IMR-90 (cell line): ENCODE measurements at regions of chr2 and their contacts with region 1.

Region 1: DNA sequence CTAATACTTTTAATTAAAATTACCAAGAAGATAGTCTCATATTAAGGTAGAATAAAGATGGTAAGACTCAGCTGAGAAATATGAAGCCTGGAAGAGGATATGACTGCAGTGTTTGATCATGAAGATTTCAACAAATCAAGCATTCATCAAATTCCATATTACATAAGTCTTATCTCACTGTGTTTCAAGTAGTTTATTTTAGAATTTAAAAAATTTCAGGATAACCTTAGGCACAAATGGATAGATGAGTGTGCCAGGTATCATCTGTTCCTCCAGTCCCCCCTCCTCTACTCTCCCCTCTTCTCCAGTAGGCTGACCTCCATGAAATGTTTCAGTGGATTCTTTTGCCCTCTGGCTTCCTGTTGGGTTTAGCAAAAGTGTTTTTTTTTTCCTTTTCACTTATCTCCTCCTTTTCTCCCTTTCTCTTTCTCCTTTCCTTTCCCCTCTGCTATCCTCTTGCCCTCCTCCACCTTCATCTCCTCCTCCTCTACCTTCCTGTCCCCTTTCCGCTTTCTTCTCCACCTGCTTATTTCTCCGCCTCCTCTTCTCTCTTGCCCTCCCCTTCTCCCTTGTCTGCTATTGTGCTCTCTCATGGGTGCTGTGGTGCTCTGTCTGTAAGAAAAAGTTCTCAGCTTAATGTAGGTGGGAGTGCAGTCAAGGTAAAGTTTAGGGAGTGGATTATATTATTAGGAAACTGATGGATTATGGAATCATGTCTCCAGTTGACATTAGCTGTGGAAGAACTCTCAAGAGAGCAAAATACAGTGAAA is 72.8 kb downstream of the ABI2 start:
- DNase-seq: peak; percentile 43
- ATAC-seq: peak; percentile 31
- H3K4me3 ChIP-seq: no peak overlapping the region
- H3K27ac ChIP-seq: peak overlapping the region; percentile 58
- H3K4me1 ChIP-seq: peaks cover 15% of the 10 kb centered on the region
- H3K27me3 ChIP-seq: no peaks in the 10 kb centered on the region
- CTCF ChIP-seq: no peak
- POLR2A ChIP-seq: no peak
- RAD21 ChIP-seq: no peak

Region 2: DNA sequence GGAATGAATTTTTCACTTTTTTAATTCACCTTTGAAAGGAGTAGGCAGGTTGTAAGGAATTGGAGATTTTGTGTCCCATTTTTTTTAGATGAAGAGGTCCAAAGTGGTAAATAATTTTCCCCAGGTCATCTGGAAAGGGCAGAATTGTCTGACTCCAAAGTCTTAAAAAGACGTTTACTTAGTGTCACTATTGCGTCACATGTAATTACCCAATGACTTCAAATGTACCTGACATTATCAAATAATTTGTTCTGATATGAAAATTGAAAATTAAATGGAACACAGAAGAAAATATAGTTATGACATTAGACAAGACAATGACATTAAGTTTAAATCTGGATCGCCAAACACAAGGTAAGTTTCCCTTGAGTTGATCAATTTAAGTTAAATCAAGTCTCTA is 410.5 kb before region 1 on chr2:
- CTCF ChIA-PET with region 1: no interaction called
- POLR2A ChIA-PET with region 1: no interaction called
- dilution Hi-C with region 1: no loop called
- in situ Hi-C with region 1: no loop called
- intact Hi-C with region 1: no loop called
- DNase-seq: no peak
- ATAC-seq: no peak
- H3K4me3 ChIP-seq: no peak overlapping the region
- H3K27ac ChIP-seq: no peak overlapping the region
- H3K4me1 ChIP-seq: no peaks in the 10 kb centered on the region
- H3K27me3 ChIP-seq: no peaks in the 10 kb centered on the region
- CTCF ChIP-seq: no peak
- POLR2A ChIP-seq: no peak
- RAD21 ChIP-seq: no peak

Region 3: DNA sequence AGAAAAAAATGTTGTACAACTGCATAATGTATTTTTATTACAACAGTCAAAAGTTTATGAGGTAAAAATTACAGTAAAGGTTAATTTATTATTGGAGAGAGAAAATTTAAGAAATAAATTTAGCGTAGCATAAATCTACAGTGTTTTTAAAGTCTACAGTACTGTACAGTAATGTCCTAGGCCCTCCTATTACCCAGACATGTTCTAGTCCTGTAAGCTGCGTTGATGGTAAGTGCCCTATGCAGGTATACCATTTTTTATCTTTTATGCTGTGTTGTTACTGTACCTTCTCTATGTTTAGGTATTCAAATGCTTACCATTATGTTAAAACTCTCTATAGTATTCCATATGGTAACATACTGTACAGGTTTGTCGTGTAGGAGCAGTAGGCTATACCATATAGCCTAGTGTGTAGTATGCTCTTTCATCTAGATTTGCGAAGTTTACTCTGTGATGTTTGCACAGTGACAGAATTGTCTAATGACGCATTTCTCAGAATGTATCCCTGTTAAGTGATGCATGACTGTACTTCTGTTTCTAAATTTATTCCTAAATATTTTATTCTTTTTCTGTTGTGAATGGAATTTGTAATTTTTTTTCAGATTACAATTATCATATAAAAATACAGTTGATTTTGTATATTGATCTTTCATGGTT is 48.3 kb before region 1 on chr2:
- CTCF ChIA-PET with region 1: no interaction called
- POLR2A ChIA-PET with region 1: no interaction called
- dilution Hi-C with region 1: no loop called
- in situ Hi-C with region 1: no loop called
- intact Hi-C with region 1: loop called (anchors 5 kb)
- DNase-seq: no peak
- ATAC-seq: no peak
- H3K4me3 ChIP-seq: no peak overlapping the region
- H3K27ac ChIP-seq: no peak overlapping the region
- H3K4me1 ChIP-seq: no peaks in the 10 kb centered on the region
- H3K27me3 ChIP-seq: no peaks in the 10 kb centered on the region
- CTCF ChIP-seq: no peak
- POLR2A ChIP-seq: no peak
- RAD21 ChIP-seq: no peak